BJ (cell line): ENCODE measurements at regions of chr20 and their contacts with region 1.

Region 1: GRCh38 chr20:21235484-21236445 is 67.4 kb upstream of the XRN2 start:
- DNase-seq: peak; percentile 8
- H3K4me3 ChIP-seq: no peak overlapping the region
- H3K27me3 ChIP-seq: no peaks in the 10 kb centered on the region
- CTCF ChIP-seq: peak; percentile 91

Region 2: DNA sequence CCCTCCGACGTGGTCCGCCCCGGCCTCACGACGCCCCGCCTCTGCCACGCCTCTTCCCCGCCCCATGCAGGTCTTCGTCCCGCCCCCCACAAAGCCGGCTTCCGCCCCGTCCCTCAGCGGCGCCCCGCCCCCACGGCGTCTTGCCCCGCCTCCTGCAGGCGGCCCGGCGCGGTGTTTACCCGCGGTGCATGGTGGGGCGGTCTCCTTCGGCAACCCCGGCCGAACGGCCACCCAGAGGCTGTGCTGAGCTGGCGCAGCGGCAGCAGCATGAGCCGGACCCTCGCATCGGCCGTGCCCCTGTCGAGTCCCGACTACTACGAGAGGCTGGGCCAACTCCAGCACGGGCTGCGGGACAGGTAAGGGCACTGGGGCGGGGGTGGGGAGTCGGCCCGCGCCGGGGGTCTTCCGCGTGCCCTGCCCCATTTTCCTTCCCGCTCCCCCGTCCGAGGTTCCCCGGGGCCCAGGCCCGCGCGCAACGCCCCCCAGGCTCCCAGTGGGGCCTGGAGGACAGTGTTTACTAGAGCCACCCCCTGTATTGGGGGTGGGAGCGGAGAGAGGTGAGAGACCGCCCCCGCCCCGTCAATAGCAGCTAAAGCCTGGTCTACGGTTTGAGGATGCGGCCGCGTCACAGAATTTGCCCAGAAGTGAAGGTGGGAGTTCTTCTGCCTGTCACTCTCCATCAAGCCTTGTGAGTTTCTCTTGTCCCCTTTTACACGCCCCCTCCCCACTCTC is 109.8 kb before region 1 on chr20 and contains the start of gene KIZ:
- CTCF ChIA-PET with region 1: interaction called, 16 read pairs
- POLR2A ChIA-PET with region 1: no interaction called
- DNase-seq: peak; percentile 59
- H3K4me3 ChIP-seq: peak within 1 kb of the TSS; percentile 97
- H3K27me3 ChIP-seq: no peaks in the 10 kb centered on the region
- CTCF ChIP-seq: peak; percentile 29; the same call in 1 of the 2 replicates
- polyA plus RNA-seq, gene KIZ: 13.6 and 22.8 TPM in 2 replicates

Region 3: GRCh38 chr20:21219686-21220085 is 16.1 kb before region 1 on chr20:
- CTCF ChIA-PET with region 1: interaction called, 36 read pairs
- POLR2A ChIA-PET with region 1: interaction called, 3 read pairs
- DNase-seq: no peak
- H3K4me3 ChIP-seq: no peak overlapping the region
- H3K27me3 ChIP-seq: no peaks in the 10 kb centered on the region
- CTCF ChIP-seq: no peak

Region 4: GRCh38 chr20:21251278-21251677 is 15.5 kb after region 1 on chr20:
- CTCF ChIA-PET with region 1: interaction called, 16 read pairs
- POLR2A ChIA-PET with region 1: no interaction called
- DNase-seq: no peak
- H3K4me3 ChIP-seq: no peak overlapping the region
- H3K27me3 ChIP-seq: no peaks in the 10 kb centered on the region
- CTCF ChIP-seq: no peak

Region 5: DNA sequence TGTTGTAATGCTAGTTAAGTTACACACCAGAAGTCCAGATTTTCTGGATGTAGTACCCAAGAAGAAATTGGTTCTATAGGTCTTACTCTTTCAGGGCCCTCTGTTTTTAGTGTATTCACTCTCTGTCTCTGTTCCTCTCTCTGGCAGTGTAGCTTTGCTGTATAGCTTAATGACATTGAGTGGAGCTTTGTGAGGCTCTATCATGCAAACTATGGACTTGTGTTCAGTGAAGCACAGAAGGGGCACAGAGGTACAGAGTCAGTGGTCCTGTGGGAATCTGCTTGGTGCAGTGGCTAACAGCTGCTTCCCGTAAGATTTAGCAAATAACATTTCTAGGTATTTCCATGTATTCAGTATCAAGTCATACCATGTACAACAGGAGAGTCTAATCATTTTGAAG is 135.4 kb after region 1 on chr20:
- CTCF ChIA-PET with region 1: interaction called, 11 read pairs
- POLR2A ChIA-PET with region 1: interaction called, 5 read pairs
- DNase-seq: no peak
- H3K4me3 ChIP-seq: no peak overlapping the region
- H3K27me3 ChIP-seq: no peaks in the 10 kb centered on the region
- CTCF ChIP-seq: no peak

Region 6: DNA sequence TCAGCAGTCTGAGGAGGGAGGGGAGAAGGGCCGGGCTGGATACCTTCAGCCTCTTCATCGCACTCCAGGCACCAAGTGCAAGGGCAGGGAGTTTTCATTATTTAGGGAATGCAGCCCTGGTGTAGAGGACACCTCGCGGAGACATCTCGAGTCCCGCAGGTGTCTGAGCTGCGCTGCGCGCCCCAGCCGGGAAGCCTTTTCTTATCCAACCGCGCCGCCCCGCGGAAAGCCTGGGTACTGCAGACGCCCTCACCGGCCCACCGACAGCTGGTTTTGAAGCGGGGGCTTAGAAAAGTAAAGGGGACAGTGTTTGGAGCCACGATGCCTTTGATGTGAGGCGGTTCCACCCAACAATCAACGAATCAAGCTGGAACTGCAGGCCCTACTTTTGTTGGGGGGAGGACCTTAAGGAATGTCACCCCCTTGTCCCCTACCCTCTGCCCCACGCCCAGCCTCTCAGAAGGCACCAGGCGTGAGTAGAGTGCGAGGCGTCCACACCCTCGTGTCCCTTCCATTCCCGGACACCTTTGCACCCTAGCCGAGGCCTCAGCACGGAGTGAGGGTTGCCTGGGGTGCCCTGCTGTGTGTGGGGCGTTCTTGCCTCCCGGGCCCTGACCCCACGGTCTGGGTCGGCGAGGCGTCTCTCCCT is 269.5 kb after region 1 on chr20:
- CTCF ChIA-PET with region 1: interaction called, 208 read pairs
- POLR2A ChIA-PET with region 1: no interaction called
- DNase-seq: no peak
- H3K4me3 ChIP-seq: peak overlapping the region; percentile 44
- H3K27me3 ChIP-seq: peaks cover 40% of the 10 kb centered on the region
- CTCF ChIP-seq: peak; percentile 99